ENCODE measurements at regions of chrX and their contacts with region 1.

Region 1: DNA sequence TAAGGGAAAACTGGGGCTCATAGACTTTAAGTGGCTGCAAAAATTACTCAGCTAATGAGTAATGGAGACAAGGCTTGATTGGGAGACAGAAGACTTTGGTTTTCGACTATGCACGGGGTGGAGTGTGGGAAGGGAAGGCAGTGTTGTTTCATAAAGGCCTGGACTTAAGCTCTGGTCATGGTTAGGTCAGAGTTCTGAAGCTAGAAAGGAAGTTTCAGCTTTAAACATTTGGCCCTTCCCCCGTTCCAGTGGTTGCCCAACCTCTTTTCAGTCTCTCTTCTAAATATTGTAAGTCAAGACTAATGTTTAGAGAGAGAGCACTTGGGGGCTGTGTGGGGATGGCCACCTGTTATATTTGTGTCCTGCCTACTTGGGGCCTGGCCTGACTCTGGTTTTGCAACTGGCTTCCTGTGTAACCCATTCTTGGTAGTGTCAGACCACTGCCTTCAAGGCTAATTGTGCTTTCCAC is 21.0 kb downstream of the MSN start:
- DNase-seq: peak; percentile 74
- ATAC-seq: peak; percentile 88
- H3K4me3 ChIP-seq: no peak overlapping the region
- H3K27ac ChIP-seq: peak overlapping the region; percentile 77
- H3K4me1 ChIP-seq: peaks cover 53% of the 10 kb centered on the region
- H3K27me3 ChIP-seq: no peaks in the 10 kb centered on the region
- CTCF ChIP-seq: no peak
- EP300 ChIP-seq: no peak
- POLR2A ChIP-seq: no peak
- RAD21 ChIP-seq: peak; percentile 20; the same call in 1 of the 2 replicates

Region 2: DNA sequence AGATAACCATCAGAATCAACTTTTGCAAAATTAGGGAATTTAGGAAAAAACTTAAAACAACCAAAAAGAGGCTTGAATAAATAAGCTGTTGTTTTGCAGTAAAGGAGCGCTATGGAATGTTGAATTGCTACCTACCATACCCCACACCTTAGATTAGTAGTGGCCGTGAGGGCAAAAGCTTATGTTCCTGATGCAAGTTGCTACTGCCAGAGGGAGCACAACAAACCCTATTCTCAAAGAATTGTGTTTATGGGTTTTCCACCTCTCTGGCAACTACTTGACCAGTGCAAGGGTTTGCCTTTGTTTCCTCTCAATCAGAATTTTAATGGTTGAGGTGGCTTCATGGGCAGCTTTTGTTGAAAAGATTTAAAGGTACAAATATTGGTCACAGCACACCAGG is 422.0 kb before region 1 on chrX:
- CTCF ChIA-PET with region 1: no interaction called
- POLR2A ChIA-PET with region 1: no interaction called
- RAD21 ChIA-PET with region 1: no interaction called
- SMC1A ChIA-PET with region 1: no interaction called
- in situ Hi-C with region 1: no loop called
- intact Hi-C with region 1: no loop called
- DNase-seq: no peak
- ATAC-seq: no peak
- H3K4me3 ChIP-seq: no peak overlapping the region
- H3K27ac ChIP-seq: no peak overlapping the region
- H3K4me1 ChIP-seq: no peaks in the 10 kb centered on the region
- H3K27me3 ChIP-seq: no peaks in the 10 kb centered on the region
- CTCF ChIP-seq: no peak
- EP300 ChIP-seq: no peak
- POLR2A ChIP-seq: no peak
- RAD21 ChIP-seq: no peak

Region 3: GRCh38 chrX:65677954-65678469 is 10.4 kb before region 1 on chrX:
- CTCF ChIA-PET with region 1: interaction called, 23 read pairs
- POLR2A ChIA-PET with region 1: interaction called, 12 read pairs
- RAD21 ChIA-PET with region 1: interaction called, 109 read pairs
- SMC1A ChIA-PET with region 1: interaction called, 112 read pairs
- in situ Hi-C with region 1: no loop called
- intact Hi-C with region 1: no loop called
- DNase-seq: no peak
- ATAC-seq: no peak
- H3K4me3 ChIP-seq: peak overlapping the region; percentile 17; the same call in 1 of the 2 replicates
- H3K27ac ChIP-seq: peak overlapping the region; percentile 18; the same call in 1 of the 2 replicates
- H3K4me1 ChIP-seq: peaks cover 11% of the 10 kb centered on the region
- H3K27me3 ChIP-seq: no peaks in the 10 kb centered on the region
- CTCF ChIP-seq: no peak
- EP300 ChIP-seq: no peak
- POLR2A ChIP-seq: no peak
- RAD21 ChIP-seq: no peak

Region 4: GRCh38 chrX:65706041-65706828 is 17.8 kb after region 1 on chrX:
- CTCF ChIA-PET with region 1: interaction called, 5 read pairs
- POLR2A ChIA-PET with region 1: interaction called, 4 read pairs
- RAD21 ChIA-PET with region 1: interaction called, 15 read pairs
- SMC1A ChIA-PET with region 1: interaction called, 12 read pairs
- in situ Hi-C with region 1: no loop called
- intact Hi-C with region 1: no loop called
- DNase-seq: no peak
- ATAC-seq: peak; percentile 77
- H3K4me3 ChIP-seq: no peak overlapping the region
- H3K27ac ChIP-seq: peak overlapping the region; percentile 29
- H3K4me1 ChIP-seq: peaks cover 33% of the 10 kb centered on the region
- H3K27me3 ChIP-seq: no peaks in the 10 kb centered on the region
- CTCF ChIP-seq: no peak
- EP300 ChIP-seq: no peak
- POLR2A ChIP-seq: peak; percentile 34; the same call in 1 of the 2 replicates
- RAD21 ChIP-seq: no peak

Region 5: GRCh38 chrX:66892004-66892403 is 1203.6 kb after region 1 on chrX:
- CTCF ChIA-PET with region 1: no interaction called
- POLR2A ChIA-PET with region 1: no interaction called
- RAD21 ChIA-PET with region 1: no interaction called
- SMC1A ChIA-PET with region 1: no interaction called
- in situ Hi-C with region 1: no loop called
- intact Hi-C with region 1: no loop called
- DNase-seq: no peak
- ATAC-seq: no peak
- H3K4me3 ChIP-seq: no peak overlapping the region
- H3K27ac ChIP-seq: no peak overlapping the region
- H3K4me1 ChIP-seq: no peaks in the 10 kb centered on the region
- H3K27me3 ChIP-seq: no peaks in the 10 kb centered on the region
- CTCF ChIP-seq: no peak
- EP300 ChIP-seq: no peak
- POLR2A ChIP-seq: no peak
- RAD21 ChIP-seq: no peak